ENCODE measurements at regions of chr3 and their contacts with region 1.

Region 1: DNA sequence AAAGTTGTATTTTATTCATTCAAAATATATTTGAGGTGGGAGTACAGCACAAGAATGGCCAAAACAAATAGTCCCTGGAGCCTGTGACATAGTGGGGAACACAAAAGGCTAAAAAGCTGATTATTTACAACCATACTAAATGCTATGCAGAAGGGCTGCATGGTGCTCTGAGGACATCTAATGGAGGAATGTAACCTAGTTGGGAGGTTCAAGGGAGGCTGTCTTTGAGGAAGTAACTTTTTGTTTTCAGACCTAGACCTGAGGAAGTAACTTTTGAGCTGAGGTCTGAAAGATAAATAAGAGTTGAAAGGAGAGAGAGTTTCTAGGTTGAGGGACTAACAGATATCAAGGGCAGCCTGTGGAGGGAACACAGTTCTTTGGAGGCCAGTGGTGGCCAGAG is 34.8 kb upstream of the RASA2 start:
- DNase-seq: peak; percentile 80
- ATAC-seq: peak; percentile 90
- H3K4me3 ChIP-seq: no peak overlapping the region
- H3K27ac ChIP-seq: no peak overlapping the region
- H3K4me1 ChIP-seq: no peaks in the 10 kb centered on the region; the same call in 1 of the 2 replicates
- H3K27me3 ChIP-seq: no peaks in the 10 kb centered on the region
- CTCF ChIP-seq: peak; percentile 75 to 95 (median 89)
- EP300 ChIP-seq: no peak
- POLR2A ChIP-seq: no peak
- RAD21 ChIP-seq: peak; percentile 100

Region 2: GRCh38 chr3:141303481-141304223 is 148.4 kb before region 1 on chr3:
- CTCF ChIA-PET with region 1: interaction called, 642 read pairs
- POLR2A ChIA-PET with region 1: interaction called, 8 read pairs
- RAD21 ChIA-PET with region 1: interaction called, 164 read pairs
- SMC1A ChIA-PET with region 1: interaction called, 405 read pairs
- in situ Hi-C with region 1: loop called (anchors 5 kb)
- intact Hi-C with region 1: loop called (anchors 1 kb)
- DNase-seq: peak; percentile 64
- ATAC-seq: peak; percentile 93
- H3K4me3 ChIP-seq: no peak overlapping the region
- H3K27ac ChIP-seq: no peak overlapping the region
- H3K4me1 ChIP-seq: peaks cover 8% of the 10 kb centered on the region
- H3K27me3 ChIP-seq: no peaks in the 10 kb centered on the region
- CTCF ChIP-seq: peak; percentile 55 to 78 (median 70); a peak in 5 of 6 replicates
- EP300 ChIP-seq: no peak
- POLR2A ChIP-seq: no peak
- RAD21 ChIP-seq: peak; percentile 89

Region 3: GRCh38 chr3:141336672-141337522 is 115.1 kb before region 1 on chr3:
- CTCF ChIA-PET with region 1: interaction called, 15 read pairs
- POLR2A ChIA-PET with region 1: no interaction called
- RAD21 ChIA-PET with region 1: interaction called, 15 read pairs
- SMC1A ChIA-PET with region 1: interaction called, 22 read pairs
- in situ Hi-C with region 1: no loop called
- intact Hi-C with region 1: no loop called
- DNase-seq: peak; percentile 95
- ATAC-seq: peak; percentile 90
- H3K4me3 ChIP-seq: peak overlapping the region; percentile 33
- H3K27ac ChIP-seq: peak overlapping the region; percentile 95
- H3K4me1 ChIP-seq: peaks cover 45% of the 10 kb centered on the region
- H3K27me3 ChIP-seq: no peaks in the 10 kb centered on the region
- CTCF ChIP-seq: no peak
- EP300 ChIP-seq: peak; percentile 27 to 98; a peak in 3 of 4 replicates
- POLR2A ChIP-seq: no peak
- RAD21 ChIP-seq: 0 out of 2 replicates have a peak, but pooled peaks have one; percentile 12

Region 4: GRCh38 chr3:141386611-141387111 is 65.4 kb before region 1 on chr3:
- CTCF ChIA-PET with region 1: interaction called, 9 read pairs
- POLR2A ChIA-PET with region 1: interaction called, 4 read pairs
- RAD21 ChIA-PET with region 1: interaction called, 8 read pairs
- SMC1A ChIA-PET with region 1: interaction called, 11 read pairs
- in situ Hi-C with region 1: no loop called
- intact Hi-C with region 1: no loop called
- DNase-seq: no peak
- ATAC-seq: peak; percentile 58
- H3K4me3 ChIP-seq: peak overlapping the region; percentile 67
- H3K27ac ChIP-seq: peak overlapping the region; percentile 94
- H3K4me1 ChIP-seq: peaks cover 30% of the 10 kb centered on the region
- H3K27me3 ChIP-seq: no peaks in the 10 kb centered on the region
- CTCF ChIP-seq: no peak
- EP300 ChIP-seq: no peak
- POLR2A ChIP-seq: peak; percentile 93
- RAD21 ChIP-seq: no peak

Region 5: DNA sequence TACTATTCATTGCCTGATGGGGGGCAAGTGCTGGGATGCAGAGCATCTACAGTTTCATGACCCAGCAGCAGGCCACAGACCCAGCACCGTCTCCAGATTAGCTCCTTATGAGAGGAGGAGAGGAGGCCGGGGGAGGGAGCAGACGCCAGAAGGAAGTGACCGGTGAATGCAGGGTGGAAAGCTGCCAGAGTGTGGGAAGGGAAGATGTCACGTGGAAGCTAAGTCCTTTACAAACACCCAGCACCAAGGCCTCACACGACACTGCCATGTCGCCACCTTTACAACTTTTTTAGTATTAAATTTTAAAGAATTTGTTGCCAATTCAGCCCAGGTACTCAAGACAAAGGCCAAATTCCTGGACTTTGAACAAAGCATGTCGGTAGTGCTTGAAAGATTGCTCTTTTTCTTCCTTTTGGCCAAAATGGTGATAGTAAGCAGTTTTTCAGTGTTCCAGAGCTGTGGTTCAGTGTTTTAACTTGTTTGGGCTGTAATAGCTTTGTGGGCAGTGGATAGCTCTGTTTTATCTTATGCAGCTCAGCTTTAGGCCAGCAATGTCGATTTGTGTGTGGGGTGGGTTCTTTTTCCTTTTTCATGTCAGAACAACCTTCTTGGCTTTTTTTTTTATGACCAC is 25.5 kb before region 1 on chr3:
- CTCF ChIA-PET with region 1: interaction called, 11 read pairs
- POLR2A ChIA-PET with region 1: no interaction called
- RAD21 ChIA-PET with region 1: interaction called, 17 read pairs
- SMC1A ChIA-PET with region 1: interaction called, 25 read pairs
- in situ Hi-C with region 1: no loop called
- intact Hi-C with region 1: no loop called
- DNase-seq: no peak
- ATAC-seq: no peak
- H3K4me3 ChIP-seq: no peak overlapping the region
- H3K27ac ChIP-seq: no peak overlapping the region
- H3K4me1 ChIP-seq: peaks cover 7% of the 10 kb centered on the region
- H3K27me3 ChIP-seq: no peaks in the 10 kb centered on the region
- CTCF ChIP-seq: no peak
- EP300 ChIP-seq: no peak
- POLR2A ChIP-seq: no peak
- RAD21 ChIP-seq: no peak

Region 6: DNA sequence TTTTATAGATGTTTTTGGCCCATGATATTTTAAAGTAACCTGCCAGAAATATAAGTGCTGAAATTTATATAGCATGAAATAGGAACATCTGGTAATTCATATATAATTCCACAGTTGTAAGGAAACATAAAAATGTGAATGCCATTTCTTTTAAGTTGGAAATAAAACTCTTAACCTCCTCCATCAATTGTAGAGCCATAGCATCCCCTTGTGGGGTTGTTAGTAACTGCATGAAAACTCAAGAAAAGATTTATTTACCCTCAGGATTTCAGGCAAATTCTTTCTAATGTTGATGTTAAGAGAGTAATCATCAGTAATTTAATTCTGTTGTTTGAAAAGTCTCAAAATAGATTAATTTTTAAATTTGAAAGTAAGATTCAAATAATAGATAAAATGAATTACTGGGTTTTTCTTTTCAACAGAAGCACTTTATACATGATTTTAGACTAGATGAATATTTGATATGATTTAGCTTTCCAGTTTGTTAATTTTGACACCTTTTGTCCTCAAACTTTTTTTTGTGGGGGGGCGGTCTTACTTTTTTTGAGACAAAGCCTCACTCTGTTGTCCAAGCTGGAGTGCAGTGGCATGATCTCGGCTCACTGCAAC is 109.5 kb after region 1 on chr3:
- CTCF ChIA-PET with region 1: interaction called, 306 read pairs
- POLR2A ChIA-PET with region 1: no interaction called
- RAD21 ChIA-PET with region 1: interaction called, 44 read pairs
- SMC1A ChIA-PET with region 1: interaction called, 103 read pairs
- in situ Hi-C with region 1: no loop called
- intact Hi-C with region 1: no loop called
- DNase-seq: no peak
- ATAC-seq: peak; percentile 45; the same call in 2 of the 3 replicates
- H3K4me3 ChIP-seq: no peak overlapping the region
- H3K27ac ChIP-seq: no peak overlapping the region
- H3K4me1 ChIP-seq: no peaks in the 10 kb centered on the region
- H3K27me3 ChIP-seq: no peaks in the 10 kb centered on the region
- CTCF ChIP-seq: peak; percentile 94 to 96 (median 94); a peak in 5 of 6 replicates
- EP300 ChIP-seq: no peak
- POLR2A ChIP-seq: no peak
- RAD21 ChIP-seq: peak; percentile 100